ENCODE measurements at regions of chr22 and their contacts with region 1.

Region 1: DNA sequence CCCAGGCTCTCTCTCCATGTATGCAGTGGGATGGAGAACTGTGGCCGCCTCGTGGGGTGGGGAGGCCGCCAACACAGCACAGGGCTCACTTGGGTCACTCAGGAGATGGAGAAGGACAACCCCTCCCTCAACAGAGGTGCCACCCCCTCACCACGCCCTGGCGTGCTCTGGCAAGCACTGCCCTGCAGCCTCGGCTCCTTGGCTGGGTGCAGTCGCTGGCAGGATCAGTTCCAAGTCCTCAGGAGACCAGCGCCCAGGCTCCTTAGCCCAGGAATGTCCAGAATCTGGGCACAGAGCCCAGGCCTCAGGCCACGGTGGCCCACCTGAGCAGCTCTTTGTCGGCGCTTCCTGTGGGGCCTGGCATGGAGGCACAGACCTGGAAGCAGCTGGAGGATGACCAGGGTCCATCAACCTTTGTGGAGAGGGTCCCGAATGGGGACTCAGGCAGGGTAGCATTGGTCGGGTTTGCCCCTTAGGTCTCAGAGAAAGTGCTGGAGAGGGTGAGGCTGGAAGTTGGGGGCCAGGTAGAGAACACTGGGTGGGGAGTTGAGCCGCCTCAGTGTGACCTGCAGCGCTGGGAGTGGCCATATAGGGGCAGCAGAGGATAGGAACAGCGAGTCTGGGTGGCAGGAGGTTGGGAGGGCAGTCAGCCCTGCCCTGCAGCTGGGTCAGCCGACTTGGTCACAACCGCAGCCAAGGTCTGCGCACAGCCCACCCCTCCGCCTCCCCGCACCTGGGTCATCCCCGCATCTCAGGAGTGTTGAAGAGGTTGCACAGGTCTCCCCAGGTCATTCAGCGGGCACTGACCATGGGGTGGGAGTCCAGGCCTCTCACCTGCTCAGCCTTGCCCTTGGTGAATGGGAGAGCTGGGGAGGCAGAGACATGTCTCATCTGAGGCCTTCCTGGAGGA is 8.2 kb downstream of the SUSD2 start:
- DNase-seq: peak; percentile 46 to 91
- H3K4me3 ChIP-seq: no peak overlapping the region
- H3K27ac ChIP-seq: no peak overlapping the region
- H3K4me1 ChIP-seq: peaks cover 0 to 7% (median 0%) of the 10 kb centered on the region in 4 experiments; a peak in 4 of 7 replicates
- H3K27me3 ChIP-seq: no peaks in the 10 kb centered on the region
- CTCF ChIP-seq: peak; percentile 96 to 98 (median 98)
- EP300 ChIP-seq: no peak
- POLR2A ChIP-seq: no peak
- RAD21 ChIP-seq: peak; percentile 99

Region 2: DNA sequence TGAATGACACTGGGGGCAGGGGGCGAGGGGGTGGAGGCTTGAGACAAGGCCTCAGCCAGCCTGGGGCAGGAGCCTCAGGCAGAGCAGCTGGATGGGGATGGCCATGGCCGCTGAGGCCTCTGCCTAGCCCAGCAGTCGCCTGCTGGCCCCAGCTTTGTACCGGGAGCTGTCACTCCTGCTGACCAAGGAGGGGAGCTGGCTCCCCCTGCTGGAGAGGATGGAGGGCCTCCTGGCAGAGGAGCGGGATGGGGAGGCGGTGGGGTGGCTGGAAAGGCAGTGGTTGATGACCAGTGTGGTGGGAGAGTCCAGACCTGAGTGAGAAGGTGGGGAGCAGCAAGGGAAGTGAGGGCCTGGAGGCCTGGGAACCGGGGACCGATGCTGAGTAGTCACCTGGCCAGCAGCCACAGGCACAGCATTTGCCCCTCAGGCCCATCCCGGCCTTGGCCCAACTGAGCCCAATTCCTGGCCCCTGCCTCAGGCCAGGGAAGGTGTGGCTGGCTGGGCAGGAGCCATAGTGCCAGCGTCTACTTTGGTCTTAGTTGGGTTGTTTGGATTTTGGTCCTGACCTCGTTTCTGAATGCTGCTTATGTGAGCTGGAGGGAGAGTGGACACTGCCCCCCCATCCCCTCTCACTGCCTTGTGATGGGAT is 14.2 kb before region 1 on chr22:
- CTCF ChIA-PET with region 1: interaction called, 70 read pairs
- POLR2A ChIA-PET with region 1: no interaction called
- DNase-seq: peak; percentile 46 to 94
- H3K4me3 ChIP-seq: no peak overlapping the region
- H3K27ac ChIP-seq: no peak overlapping the region
- H3K4me1 ChIP-seq: no peaks in the 10 kb centered on the region; a peak in 1 of 7 replicates
- H3K27me3 ChIP-seq: no peaks in the 10 kb centered on the region
- CTCF ChIP-seq: peak; percentile 94 to 97 (median 94)
- EP300 ChIP-seq: peak in 1 of 2 experiments; percentile 13; a peak in 1 of 3 replicates
- POLR2A ChIP-seq: no peak
- RAD21 ChIP-seq: peak; percentile 84 to 92

Region 3: DNA sequence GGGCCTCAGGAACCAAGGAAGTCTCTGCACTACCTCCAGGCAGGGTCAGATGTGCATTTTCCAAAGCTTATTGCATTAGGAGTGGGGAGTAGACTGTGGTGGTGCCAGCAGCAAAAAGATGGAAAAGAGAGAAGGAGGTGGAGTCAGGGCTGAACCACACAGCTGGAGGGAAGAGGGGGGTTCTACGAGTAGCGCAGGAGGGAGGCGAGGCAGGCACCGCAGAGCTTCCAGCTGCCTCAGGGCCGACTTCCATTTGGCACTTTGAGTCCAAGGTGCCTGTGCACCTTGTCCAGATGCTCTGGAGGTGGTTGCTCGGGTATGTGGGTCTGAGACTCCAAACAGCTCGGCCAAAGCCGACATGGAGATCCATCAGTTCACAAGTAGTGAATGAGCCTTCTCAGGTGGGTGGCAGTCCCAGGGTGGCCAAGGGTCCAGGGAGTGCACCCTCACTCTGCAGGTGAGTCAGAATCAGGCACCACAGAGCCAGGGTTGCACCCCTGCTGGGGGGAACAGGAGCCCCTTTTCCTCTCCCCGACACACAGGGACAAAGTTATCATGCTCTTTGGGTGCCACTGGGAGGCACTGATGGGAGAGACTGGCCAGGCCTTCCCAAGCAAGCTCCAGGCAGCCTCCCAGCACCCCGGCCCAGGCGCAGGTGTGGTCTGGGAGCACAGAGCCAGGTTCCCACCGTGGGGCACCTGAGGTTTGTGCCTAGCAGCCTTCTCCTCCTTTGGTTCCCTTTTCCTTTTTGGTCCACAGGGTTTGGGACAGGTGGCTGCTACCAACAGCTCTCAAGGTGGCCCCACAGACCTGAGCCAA is 25.2 kb after region 1 on chr22:
- CTCF ChIA-PET with region 1: interaction called, 27 read pairs
- POLR2A ChIA-PET with region 1: no interaction called
- DNase-seq: no peak
- H3K4me3 ChIP-seq: no peak overlapping the region
- H3K27ac ChIP-seq: no peak overlapping the region
- H3K4me1 ChIP-seq: no peaks in the 10 kb centered on the region
- H3K27me3 ChIP-seq: no peaks in the 10 kb centered on the region
- CTCF ChIP-seq: no peak
- EP300 ChIP-seq: no peak
- POLR2A ChIP-seq: no peak
- RAD21 ChIP-seq: no peak

Region 4: GRCh38 chr22:24230911-24231656 is 41.6 kb after region 1 on chr22:
- CTCF ChIA-PET with region 1: interaction called, 96 read pairs
- POLR2A ChIA-PET with region 1: no interaction called
- DNase-seq: peak; percentile 51 to 98
- H3K4me3 ChIP-seq: no peak overlapping the region
- H3K27ac ChIP-seq: no peak overlapping the region; the same call in 1 of the 2 replicates
- H3K4me1 ChIP-seq: peaks cover 0 to 5% (median 4%) of the 10 kb centered on the region in 4 experiments; a peak in 3 of 7 replicates
- H3K27me3 ChIP-seq: no peaks in the 10 kb centered on the region; a peak in 2 of 7 replicates
- CTCF ChIP-seq: peak; percentile 55 to 81 (median 78)
- EP300 ChIP-seq: no peak
- POLR2A ChIP-seq: no peak
- RAD21 ChIP-seq: peak; percentile 44 to 67; a peak in 3 of 4 replicates

Measured in H1 (cell line).